Head of caudate nucleus (tissue), 42 donors: ENCODE measurements at regions of chr14 and their contacts with region 1.

Region 1: GRCh38 chr14:64387694-64388532 is at the start of gene MTHFD1:
- DNase-seq: peak; percentile 94 to 99 (median 97)

Region 2: DNA sequence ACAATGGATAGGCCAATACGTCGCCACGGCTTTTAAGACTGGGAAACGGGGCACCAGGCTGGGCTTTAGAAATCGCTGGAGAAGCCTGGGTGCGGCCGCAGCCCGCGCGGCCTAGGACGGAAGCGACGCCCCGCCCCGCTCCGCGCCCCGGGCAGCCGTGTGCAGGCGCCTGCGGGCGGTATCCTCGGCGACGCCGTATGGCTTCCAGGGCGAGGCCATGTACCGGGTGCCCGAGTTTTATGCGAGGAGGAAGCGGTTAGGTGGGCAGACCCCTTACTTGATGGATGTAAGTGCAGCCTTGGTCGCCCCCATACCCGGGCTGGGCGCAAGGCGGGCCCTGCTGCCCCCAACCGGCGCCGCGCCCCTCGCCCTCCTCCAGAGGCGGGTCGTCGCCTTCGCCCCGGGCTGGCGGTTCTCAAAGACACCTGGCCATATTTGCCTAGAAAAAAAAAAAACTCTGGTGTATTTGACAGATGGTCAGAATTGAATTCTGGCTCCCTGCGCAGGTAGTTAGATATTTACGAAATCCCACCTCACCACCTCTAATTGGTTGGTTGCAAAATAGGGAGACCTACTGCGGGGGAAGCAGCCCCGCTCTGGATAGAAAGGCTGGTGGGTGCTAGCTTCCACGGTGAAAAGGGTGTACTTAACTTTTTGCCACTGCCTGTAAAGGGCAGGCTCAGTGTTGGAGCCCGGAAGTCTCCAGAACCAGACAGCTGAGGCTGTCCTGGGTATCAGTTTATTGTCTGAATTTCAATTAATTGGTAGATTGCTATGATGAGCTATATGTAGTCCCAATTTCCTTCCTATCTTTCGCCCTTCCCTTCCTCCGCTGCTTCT is 162.1 kb after region 1 on chr14 and contains the start of gene PPP1R36:
- intact Hi-C with region 1: no loop called
- DNase-seq: peak in 22 of 42 donors; percentile 11 to 58 (median 35)

Region 3: DNA sequence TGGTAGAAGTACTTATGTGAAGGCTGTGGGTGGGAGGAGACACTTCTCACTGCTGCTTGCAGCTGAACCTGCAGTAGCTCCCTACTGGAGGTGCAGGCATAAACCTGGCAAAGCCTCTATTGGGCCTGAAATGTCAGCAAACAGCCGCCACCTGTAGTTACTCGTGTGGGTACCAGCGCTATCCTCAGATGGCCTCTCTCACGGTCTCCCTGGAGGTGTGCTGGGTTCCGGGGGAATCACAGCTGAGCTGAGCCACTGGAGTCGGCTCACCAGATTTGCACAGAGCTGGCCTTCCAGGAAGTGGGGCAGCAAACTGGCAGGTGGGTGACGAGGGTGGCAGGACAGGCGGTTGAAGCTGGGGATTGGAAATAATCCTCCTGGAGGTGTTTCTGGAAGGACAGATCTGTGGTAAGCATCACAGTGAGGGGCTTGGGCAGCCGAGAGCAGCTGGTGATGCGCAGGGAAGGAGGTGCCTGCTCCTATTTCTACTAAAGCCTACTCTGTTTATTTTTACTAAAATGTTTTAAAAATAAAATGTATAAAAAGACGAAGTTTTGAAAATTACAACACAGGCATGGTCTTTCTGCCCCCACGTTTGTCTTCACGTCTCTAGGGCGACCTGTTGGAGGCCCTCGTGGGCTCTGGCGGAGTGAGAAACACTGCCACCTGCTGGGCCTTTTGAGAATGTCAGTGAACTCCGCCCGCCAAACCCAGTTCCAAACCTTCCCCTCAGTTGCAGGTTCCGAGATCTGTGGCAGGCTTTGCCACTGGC is 248.5 kb after region 1 on chr14:
- intact Hi-C with region 1: loop called (anchors 10 kb)
- DNase-seq: peak; percentile 63 to 93 (median 83)